ENCODE measurements at regions of chr14 and their contacts with region 1.

Region 1: DNA sequence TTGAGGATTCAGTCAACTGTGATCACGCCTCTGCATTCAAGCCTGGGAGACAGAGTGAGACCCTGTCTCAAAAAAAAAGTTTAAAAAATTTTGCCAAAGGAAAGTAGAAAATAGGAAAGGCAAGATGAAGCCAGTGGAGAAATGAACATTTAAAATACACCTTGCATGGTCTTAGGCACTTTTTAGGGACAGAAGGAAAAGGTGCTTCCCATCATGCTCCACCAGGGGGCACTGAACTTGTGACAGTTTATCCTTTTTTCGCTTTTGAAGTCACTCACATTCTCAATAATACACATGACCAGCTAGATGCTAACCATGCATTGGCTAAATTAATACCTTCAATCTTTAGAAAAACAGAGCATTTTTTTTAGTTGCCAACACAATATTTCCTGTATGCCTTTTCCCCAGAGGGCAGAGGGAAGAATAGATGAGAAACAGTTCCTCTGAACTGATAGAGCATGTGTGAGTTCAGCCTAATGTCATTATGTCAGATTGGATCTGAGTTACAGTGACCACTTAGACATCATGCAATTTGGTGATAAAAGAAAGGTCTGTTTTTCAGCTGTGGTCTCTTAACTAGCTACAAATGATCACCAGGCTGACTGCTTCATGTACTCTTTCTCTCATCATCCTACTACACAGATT is 221.8 kb upstream of the SSTR1 start:
- DNase-seq: peak; percentile 63
- ATAC-seq: peak; percentile 36
- H3K4me3 Mint-ChIP-seq: no peak overlapping the region
- H3K27ac Mint-ChIP-seq: no peak overlapping the region
- H3K4me1 Mint-ChIP-seq: no peaks in the 10 kb centered on the region
- H3K27me3 Mint-ChIP-seq: no peaks in the 10 kb centered on the region

Region 2: GRCh38 chr14:38197001-38197783 is 211.2 kb after region 1 on chr14:
- CTCF ChIA-PET with region 1: interaction called, 5 read pairs
- POLR2A ChIA-PET with region 1: no interaction called
- intact Hi-C with region 1: loop called (anchors 1 kb)
- DNase-seq: no peak
- ATAC-seq: no peak
- H3K4me3 Mint-ChIP-seq: no peak overlapping the region
- H3K27ac Mint-ChIP-seq: no peak overlapping the region
- H3K4me1 Mint-ChIP-seq: peaks cover 3% of the 10 kb centered on the region
- H3K27me3 Mint-ChIP-seq: no peaks in the 10 kb centered on the region